ENCODE measurements at regions of chr14 and their contacts with region 1.

Region 1: GRCh38 chr14:28764257-28765160 is 2.1 kb upstream of the FOXG1 start:
- DNase-seq: no peak
- ATAC-seq: no peak
- H3K4me3 ChIP-seq: no peak overlapping the region
- H3K27ac ChIP-seq: no peak overlapping the region
- H3K4me1 ChIP-seq: no peaks in the 10 kb centered on the region; the same call in 1 of the 2 replicates
- H3K27me3 ChIP-seq: peaks cover 80% of the 10 kb centered on the region
- CTCF ChIP-seq: no peak
- POLR2A ChIP-seq: no peak
- RAD21 ChIP-seq: no peak

Region 2: DNA sequence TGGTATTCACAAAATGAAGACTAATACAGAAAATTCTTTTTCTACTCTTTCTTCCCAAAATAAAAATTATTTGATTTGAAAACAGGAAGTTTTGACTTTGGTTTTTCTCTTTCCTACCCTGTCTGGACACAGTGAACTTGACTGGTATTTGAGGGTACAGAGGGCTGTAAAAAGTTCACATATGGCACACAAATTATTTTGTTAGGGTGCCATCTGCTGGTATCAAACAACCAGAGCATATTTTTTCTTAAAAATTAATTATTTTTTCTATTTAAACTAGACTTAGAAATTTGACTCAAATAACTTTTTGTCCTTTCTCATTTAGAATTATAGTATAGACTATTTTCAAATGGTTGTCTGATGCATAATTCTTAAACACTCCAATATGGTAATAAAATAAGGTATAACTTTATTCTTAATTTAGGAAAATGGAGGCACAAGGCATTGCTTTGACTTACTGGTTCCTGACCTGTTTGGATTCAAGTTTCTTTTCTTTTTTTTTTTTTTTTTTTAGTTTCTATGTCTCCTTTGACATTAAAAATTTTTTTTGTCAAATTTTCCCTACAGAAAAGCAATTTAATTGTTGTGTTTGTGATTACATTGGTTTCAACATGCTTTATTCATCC is 772.5 kb after region 1 on chr14:
- CTCF ChIA-PET with region 1: no interaction called
- POLR2A ChIA-PET with region 1: no interaction called
- dilution Hi-C with region 1: loop called (anchors 10 kb)
- in situ Hi-C with region 1: loop called (anchors 5 kb)
- intact Hi-C with region 1: no loop called
- DNase-seq: peak; percentile 35
- ATAC-seq: peak; percentile 60
- H3K4me3 ChIP-seq: no peak overlapping the region
- H3K27ac ChIP-seq: no peak overlapping the region
- H3K4me1 ChIP-seq: no peaks in the 10 kb centered on the region
- H3K27me3 ChIP-seq: peaks cover 8% of the 10 kb centered on the region
- CTCF ChIP-seq: peak; percentile 61
- POLR2A ChIP-seq: no peak
- RAD21 ChIP-seq: peak; percentile 53

Measured in IMR-90 (cell line).